ENCODE measurements at regions of chr19 and their contacts with region 1.

Region 1: GRCh38 chr19:35090506-35091237 is 25.0 kb upstream of the FXYD3 start:
- DNase-seq: no peak
- H3K4me3 Mint-ChIP-seq: no peak overlapping the region
- H3K27ac Mint-ChIP-seq: no peak overlapping the region
- H3K4me1 Mint-ChIP-seq: no peaks in the 10 kb centered on the region
- H3K27me3 Mint-ChIP-seq: peaks cover 4% of the 10 kb centered on the region

Region 2: GRCh38 chr19:35044317-35045117 is 46.2 kb before region 1 on chr19:
- intact Hi-C with region 1: loop called (anchors 1 kb)
- DNase-seq: peak; percentile 34
- H3K4me3 Mint-ChIP-seq: no peak overlapping the region
- H3K27ac Mint-ChIP-seq: no peak overlapping the region
- H3K4me1 Mint-ChIP-seq: peaks cover 6% of the 10 kb centered on the region
- H3K27me3 Mint-ChIP-seq: peaks cover 10% of the 10 kb centered on the region

Region 3: DNA sequence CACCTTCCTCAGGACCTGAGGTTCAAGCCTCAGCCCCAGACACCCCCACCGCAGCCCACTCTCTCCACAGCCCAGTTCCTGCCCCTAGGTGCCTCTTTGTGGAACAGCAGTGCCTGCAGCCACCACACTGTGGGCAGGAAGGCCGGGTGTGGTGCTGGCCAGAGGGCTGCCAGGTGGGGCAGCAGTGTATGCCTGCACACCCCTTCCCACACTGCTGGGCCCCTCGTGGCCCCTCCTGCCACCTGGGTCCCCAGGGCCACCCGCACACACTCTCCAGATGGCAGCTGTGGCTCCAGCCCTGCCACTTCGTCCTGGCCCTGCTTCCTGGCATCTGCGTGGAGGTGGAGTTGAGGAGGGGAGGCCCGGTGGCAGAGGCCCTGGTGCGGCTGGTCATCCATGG is 14.0 kb before region 1 on chr19:
- intact Hi-C with region 1: no loop called
- DNase-seq: no peak
- H3K4me3 Mint-ChIP-seq: no peak overlapping the region
- H3K27ac Mint-ChIP-seq: no peak overlapping the region
- H3K4me1 Mint-ChIP-seq: no peaks in the 10 kb centered on the region
- H3K27me3 Mint-ChIP-seq: no peaks in the 10 kb centered on the region